ENCODE measurements at regions of chr10 and their contacts with region 1.

Region 1: GRCh38 chr10:89029785-89030437 is 39.3 kb downstream of the FAS start:
- DNase-seq: peak; percentile 90
- H3K4me3 Mint-ChIP-seq: no peak overlapping the region
- H3K27ac Mint-ChIP-seq: no peak overlapping the region
- H3K4me1 Mint-ChIP-seq: peaks cover 33% of the 10 kb centered on the region
- H3K27me3 Mint-ChIP-seq: no peaks in the 10 kb centered on the region

Region 2: DNA sequence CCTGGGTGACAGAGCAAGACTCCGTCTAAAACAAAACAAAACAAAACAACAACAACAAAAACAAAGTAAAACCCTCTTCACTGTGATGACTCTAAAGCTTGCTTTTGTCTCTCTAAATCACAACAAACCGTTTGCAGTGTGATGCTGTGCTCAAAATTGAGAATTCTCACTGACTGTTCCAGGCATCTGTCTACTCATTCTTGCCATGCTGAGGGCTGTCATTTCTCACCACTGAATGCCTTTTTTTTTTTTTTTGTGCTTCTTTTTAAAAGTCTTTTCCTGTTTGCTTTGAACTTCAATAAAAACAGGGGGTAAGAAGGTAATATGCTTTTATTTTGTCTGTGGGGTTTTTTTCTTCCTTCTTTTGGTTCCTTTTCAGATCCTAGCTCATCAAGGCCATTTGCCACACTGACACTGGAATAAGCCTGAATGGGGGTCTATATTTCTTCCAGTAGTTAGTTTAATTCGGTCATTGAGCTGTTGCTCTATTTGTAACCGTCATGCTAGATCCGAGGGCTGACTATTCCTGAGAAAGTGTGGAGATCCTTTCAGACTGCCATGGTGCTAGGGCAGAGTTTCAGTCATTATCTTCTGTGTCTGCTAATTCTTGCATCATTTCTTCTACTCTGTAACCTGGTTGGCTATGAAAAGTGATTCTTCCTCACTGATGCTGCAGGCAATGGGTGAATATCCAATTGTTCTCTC is 28.7 kb before region 1 on chr10:
- intact Hi-C with region 1: loop called (anchors 1 kb)
- DNase-seq: peak; percentile 79
- H3K4me3 Mint-ChIP-seq: peak overlapping the region; percentile 82
- H3K27ac Mint-ChIP-seq: peak overlapping the region; percentile 91
- H3K4me1 Mint-ChIP-seq: peaks cover 60% of the 10 kb centered on the region
- H3K27me3 Mint-ChIP-seq: no peaks in the 10 kb centered on the region

Region 3: DNA sequence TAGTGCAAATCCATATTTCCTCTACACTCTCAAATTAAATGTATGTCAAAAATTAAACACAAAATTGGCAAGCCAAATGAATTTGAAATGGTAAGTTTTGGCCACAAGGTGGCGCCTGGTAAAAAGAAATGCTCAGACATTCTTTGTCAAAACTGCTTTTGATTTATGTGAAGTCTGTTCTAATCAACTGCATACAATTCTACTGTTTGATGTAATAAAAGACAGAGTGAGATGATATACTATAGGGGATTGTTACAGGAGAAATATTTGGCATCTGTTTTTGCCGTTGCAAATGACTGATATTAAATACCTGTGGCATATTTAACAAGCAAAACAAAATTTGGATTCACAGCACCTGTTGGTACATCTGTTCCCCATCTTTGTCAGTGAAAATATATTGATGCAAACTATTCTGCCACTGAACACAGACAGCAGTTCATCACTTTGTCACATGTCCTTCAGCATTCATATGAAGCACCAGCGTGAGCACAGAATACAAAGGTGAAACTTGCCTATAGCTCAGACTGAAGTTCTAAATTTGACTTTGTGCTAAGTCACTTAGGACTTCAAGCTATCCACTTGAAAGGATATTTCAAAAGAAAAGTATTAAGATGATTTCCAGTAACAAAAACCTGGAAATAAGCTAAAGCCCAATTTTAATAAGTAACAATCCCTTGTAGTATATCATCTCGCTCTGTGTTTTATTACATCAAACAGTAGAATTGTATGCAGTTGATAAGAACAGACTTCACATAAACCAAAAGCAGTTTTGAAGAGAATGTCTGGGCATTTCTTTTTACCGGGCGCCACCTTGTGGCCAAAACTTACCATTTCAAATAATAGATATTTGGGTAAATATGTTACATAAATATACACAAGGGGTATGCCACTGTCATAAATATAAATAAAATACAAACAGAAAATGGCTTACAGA is 187.4 kb after region 1 on chr10:
- intact Hi-C with region 1: loop called (anchors 1 kb)
- DNase-seq: peak; percentile 89
- H3K4me3 Mint-ChIP-seq: no peak overlapping the region
- H3K27ac Mint-ChIP-seq: no peak overlapping the region
- H3K4me1 Mint-ChIP-seq: peaks cover 9% of the 10 kb centered on the region
- H3K27me3 Mint-ChIP-seq: peaks cover 2% of the 10 kb centered on the region